ENCODE measurements at regions of chr6 and their contacts with region 1.

Region 1: DNA sequence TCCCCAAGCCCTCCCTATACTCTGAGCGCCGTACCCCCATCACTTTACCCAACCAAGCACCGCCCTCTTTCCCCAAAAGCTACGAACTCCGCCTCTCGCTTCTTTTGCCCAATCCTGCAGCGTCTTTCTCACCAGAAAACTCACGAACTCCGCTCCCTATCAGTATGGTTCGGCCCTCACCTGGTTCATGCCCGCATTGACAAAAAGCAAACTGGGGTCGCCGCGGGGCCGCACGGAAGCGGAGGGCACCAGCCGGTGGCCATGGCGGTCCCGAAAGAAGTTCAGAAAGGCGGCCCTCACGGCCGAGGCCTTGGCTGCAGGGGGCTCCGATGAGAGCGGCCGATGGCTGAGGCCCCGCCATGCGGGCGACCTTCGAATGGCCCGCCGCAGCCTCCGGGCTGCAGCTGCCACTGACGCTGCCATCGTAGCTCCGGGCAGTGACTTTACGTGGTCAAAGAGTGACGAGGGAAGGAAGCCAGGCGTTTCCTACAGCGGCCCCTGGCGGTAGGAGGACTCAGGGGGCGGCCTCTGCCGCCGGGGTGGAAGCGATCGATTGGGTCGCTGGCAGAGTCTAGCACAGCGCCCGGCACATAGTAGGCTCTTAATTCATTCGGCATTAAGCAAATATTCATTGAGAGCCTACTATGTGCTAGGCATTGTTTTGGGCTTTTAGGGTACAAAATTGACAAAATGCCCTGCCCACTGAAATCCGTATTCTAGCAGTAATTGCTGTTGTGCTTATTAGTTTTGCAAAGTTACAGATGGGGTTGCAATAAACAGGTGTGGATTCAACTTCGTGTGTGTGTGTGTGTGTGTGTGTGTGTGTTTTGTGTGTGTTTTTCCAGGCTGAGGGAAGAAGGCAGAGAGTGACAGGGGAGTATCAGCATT is at the start of gene AARS2:
- DNase-seq: peak; percentile 94
- total RNA-seq, gene AARS2: 7.8 TPM

Region 2: DNA sequence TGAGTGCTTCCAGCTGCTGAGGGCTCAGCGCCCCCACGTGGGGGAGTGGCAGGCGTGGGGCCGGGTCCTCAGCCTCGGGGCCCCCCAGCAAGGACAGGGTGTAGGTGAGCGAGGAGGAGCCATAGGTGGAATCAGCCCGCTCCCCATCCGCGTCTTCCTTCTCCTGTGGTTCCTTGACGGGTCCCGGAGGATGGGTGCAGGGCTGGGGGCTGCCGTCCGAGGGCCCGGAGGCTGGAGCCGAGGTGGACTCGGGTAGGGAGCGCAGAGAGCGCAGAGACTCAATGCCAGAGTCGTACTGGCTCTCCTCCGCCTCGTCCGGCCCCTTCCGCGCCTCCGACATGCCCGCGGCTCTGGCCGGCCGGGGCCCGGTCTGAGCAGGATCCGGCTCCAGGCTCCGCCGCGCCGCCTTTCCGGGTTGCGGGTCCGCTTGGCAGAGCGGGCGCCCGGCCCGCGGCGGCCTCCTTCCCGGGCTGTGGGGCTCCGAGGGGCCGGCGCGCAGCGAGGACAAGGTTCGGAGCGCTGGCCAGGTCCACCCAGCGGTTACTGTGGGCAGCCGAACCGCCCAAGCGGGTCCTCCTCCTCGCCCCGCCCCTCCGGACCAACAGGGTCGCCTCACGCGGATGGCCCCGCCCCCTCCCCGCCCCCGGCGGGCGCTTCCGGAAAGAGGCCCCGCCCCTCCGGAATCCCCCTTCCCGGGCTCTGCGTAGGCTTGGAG is 48.0 kb before region 1 on chr6 and contains the start of gene NFKBIE:
- intact Hi-C with region 1: loop called (anchors 5 kb)
- DNase-seq: peak; percentile 97
- total RNA-seq, gene NFKBIE: 4.7 TPM